GM13976 (cell line): ENCODE measurements at regions of chr1 and their contacts with region 1.

Region 1: DNA sequence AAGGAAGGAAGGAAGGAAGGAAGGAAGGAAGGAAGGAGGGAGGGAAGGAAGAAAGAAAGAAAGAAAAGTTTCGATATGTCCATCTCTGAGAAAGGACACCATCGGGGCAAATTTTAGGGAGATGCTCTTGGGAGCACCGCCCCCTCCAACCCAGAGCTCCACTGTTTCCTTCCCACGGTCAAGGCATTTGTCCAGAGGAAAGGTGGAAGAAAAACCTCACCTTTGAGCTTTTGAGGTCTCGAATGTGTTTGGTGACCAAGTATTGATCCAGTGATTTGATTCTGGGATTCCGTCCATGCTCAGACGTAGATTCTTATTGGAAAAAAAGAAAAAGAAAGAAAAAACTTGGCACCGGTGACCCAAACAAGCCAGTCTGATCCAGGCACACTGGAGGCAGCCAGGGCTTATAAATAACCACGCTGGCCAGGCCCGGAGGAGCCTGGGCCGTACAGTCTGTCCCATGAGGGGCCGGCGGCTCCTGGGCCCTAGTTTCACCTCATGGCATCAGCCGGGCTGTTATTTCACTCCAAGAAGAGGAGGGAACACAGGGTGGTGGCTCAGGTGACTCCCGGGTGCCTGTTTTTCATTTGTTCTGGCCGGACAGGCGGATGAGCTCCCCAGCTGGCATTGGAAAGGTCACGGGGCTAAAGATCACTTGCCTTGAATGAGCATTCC is 36.1 kb upstream of the SLC25A33 start:
- DNase-seq: no peak
- CTCF ChIP-seq: no peak

Region 2: DNA sequence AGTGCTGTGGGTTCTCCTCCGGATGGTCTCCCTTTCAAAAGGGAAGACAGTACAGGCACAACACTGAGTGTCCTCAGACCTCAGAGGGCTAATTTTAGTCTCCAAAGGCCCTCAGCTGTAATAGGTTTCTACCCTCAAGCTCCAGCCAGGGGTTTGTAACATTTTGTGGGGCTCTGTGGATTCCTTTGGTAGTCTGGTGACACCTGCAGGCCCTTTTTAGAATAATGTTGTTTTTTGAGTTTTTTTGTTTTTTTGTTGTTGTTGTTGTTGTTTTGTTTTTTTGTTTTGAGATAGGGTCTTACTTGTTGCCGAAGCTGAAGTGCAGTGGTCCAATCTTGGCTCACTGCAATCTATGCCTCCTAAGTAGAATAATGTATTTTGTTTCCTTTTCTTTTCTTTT is 70.6 kb after region 1 on chr1:
- in situ Hi-C with region 1: loop called (anchors 10 kb)
- DNase-seq: no peak
- CTCF ChIP-seq: no peak

Region 3: DNA sequence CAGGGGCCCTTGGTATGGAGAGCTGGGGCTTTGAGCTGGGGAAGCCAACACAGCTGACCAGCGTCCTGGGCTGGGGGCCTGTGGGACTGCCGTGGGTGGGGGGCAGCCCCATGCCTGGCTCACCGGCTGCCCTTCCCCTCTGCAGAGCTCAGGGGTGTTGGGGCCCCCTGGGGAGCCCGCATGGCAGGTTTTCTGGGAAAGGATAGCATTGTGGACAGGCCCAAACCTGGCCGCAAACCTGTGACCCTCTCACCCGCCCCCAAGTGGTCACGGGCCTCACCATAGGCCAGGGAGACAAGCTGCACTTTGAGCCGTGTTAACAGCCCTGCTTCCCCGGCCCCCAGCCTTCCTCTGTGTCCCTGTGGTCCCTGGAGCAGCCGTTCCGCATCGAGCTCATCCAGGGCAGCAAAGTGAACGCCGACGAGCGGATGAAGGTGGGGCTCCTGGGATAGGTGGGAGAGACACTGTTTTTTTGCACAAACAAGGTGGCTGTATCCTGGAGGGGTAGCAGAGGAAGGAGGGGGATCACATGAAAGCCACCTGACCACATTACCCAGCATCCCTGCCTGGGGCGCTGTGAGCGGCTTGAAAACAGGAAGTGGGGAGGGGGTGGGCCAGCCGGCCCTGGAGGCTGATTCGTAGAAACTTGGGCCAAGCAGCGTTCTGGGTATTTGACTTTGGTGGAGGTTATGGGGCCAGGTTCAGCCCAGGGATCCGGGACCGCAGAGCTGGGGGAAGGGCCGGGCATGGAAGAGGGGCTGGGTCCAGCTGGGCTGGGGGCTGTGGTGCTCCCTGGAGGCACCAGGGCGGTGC is 214.3 kb after region 1 on chr1:
- in situ Hi-C with region 1: no loop called
- DNase-seq: peak; percentile 92
- CTCF ChIP-seq: no peak

Region 4: GRCh38 chr1:9890224-9890731 is 387.1 kb after region 1 on chr1:
- in situ Hi-C with region 1: no loop called
- DNase-seq: no peak
- CTCF ChIP-seq: no peak